ENCODE measurements at regions of chr1 and their contacts with region 1.

Region 1: DNA sequence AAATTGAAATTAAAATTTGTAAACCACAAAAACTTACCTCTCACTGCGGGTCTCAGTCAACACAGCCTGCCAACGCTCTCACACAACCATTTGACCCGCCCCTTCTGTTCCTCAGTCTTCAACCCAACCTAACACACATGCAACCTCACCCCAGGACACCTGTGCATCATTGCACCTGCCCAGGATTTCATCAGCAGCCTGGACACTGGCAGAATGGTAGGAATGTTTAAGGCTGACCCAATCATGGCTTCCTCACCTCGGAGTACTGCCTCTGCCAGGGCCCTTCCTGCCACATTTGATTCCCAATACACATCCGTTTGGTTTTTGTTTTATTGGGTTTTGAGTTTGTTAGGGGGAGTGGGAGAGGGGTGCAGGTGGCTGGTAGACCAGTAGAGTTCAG is 40.7 kb downstream of the TOMM20 start:
- DNase-seq: no peak
- H3K4me3 ChIP-seq: no peak overlapping the region
- CTCF ChIP-seq: no peak
- POLR2A ChIP-seq: no peak

Region 2: DNA sequence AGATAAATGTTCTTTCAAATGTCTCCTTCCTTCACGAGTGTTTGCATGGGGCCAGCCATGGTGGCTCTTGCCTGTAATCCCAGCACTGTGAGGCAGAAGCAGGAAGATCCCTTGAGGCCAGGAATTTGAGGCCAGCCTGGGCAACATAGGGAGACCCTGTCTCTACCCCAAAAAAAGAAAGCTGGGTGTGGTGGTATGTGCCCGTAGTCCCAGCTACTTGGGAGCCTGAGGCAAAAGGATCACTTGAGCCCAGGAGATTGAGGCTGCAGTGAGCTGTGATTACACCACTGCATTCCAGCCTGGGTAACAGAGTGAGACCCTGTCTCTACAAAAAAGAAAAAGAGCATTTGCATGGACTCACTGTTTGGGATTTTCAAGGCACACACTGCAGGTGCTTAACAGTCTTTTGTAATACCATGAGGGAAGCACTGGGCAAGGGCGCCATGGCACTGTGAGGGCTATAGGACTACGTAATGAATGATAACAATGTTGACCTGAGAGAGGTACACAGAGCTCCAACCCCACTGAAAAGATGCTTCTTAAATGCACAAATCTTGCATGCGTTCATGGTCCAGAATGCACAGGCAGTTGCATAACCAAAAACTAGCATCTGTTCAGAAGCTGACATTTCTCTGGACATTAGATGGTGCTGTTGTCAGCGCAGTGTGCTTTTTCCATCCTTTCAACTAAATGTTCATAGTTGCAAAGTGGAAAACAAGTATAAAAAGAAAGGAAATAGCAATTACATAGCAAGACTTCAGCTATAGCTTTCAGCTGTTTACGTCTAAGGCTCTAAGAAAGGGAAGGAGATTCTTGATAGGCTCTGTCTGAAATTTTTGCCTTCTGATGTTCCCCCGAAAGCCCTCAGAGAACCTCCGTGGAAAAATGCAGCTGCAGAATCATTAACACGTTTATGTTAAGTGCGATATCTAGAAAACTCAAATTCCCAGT is 601.1 kb before region 1 on chr1:
- intact Hi-C with region 1: loop called (anchors 5 kb)
- DNase-seq: no peak
- H3K4me3 ChIP-seq: no peak overlapping the region
- CTCF ChIP-seq: no peak
- POLR2A ChIP-seq: no peak